Gastrocnemius medialis (tissue), 4 donors: ENCODE measurements at regions of chr11 and their contacts with region 1.

Region 1: GRCh38 chr11:87063982-87064381 is 26.2 kb downstream of the TMEM135 start:
- DNase-seq: no peak
- ATAC-seq: no peak
- H3K4me3 ChIP-seq: no peak overlapping the region
- H3K27ac ChIP-seq: no peak overlapping the region
- H3K4me1 ChIP-seq: no peaks in the 10 kb centered on the region
- H3K27me3 ChIP-seq: no peaks in the 10 kb centered on the region
- CTCF ChIP-seq: no peak
- POLR2A ChIP-seq: no peak

Region 2: DNA sequence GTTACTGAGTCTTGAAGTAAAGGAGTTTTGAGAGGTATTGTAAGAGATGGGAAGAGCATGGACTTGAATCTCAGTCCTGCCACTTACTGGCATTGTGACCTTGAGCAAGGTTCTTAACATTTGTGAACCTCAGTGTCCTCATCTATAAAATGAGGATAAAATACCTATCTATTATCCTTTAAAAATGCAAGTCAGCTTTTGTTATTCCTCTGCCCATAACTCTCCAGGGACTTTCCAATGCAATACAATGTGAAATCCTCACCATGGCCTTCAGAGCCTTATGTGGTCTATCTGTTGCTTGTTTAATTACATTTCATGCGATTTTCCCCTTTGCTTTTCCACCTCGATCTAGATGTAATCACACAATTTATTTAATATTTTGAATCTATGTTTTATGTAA is 17.2 kb before region 1 on chr11:
- in situ Hi-C with region 1: no loop called
- intact Hi-C with region 1: loop called (anchors 2 kb)
- DNase-seq: no peak
- ATAC-seq: no peak
- H3K4me3 ChIP-seq: no peak overlapping the region
- H3K27ac ChIP-seq: no peak overlapping the region
- H3K4me1 ChIP-seq: no peaks in the 10 kb centered on the region
- H3K27me3 ChIP-seq: no peaks in the 10 kb centered on the region
- CTCF ChIP-seq: no peak
- POLR2A ChIP-seq: no peak